Activated naive CD4-positive, alpha-beta T cell treated with anti-CD3 and anti-CD28 coated beads for 36 hours (primary cell): ENCODE measurements at regions of chr7 and their contacts with region 1.

Region 1: DNA sequence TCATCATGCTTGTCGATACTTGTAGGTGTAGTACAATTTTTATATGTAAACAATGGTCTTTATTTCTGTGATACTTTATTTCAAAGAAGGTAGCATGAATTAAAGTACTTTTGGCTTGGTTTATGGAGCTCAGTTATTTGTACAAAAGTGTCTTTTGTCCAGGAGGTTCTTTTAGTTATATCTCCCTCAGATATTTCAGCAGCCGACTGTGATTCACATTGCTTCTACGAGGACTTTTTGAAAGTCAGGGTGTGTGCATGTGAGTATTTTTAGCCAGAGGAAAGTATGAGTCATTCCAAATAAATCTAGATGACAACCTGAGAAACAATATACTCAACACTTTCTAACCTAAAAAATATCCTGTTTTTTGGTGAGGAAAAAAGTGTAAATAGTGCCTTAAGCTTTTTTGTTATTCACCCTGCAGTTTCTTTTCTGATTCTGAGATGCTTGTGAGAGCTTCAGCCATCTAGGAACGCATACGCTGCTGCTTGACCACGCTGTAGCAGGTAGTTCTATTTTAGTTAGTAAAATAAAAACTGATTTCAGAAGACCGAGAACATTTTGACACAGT is 595 bp upstream of the SUN1 start:
- DNase-seq: peak; percentile 53
- H3K4me3 Mint-ChIP-seq: peak overlapping the region; percentile 73
- H3K27ac Mint-ChIP-seq: peak overlapping the region; percentile 99
- H3K4me1 Mint-ChIP-seq: peaks cover 68% of the 10 kb centered on the region
- H3K27me3 Mint-ChIP-seq: no peaks in the 10 kb centered on the region

Region 2: GRCh38 chr7:593324-594115 is 238.2 kb before region 1 on chr7:
- CTCF ChIA-PET with region 1: no interaction called
- intact Hi-C with region 1: no loop called
- DNase-seq: peak; percentile 65
- H3K4me3 Mint-ChIP-seq: peak overlapping the region; percentile 36
- H3K27ac Mint-ChIP-seq: peak overlapping the region; percentile 69
- H3K4me1 Mint-ChIP-seq: peaks cover 31% of the 10 kb centered on the region
- H3K27me3 Mint-ChIP-seq: no peaks in the 10 kb centered on the region

Region 3: DNA sequence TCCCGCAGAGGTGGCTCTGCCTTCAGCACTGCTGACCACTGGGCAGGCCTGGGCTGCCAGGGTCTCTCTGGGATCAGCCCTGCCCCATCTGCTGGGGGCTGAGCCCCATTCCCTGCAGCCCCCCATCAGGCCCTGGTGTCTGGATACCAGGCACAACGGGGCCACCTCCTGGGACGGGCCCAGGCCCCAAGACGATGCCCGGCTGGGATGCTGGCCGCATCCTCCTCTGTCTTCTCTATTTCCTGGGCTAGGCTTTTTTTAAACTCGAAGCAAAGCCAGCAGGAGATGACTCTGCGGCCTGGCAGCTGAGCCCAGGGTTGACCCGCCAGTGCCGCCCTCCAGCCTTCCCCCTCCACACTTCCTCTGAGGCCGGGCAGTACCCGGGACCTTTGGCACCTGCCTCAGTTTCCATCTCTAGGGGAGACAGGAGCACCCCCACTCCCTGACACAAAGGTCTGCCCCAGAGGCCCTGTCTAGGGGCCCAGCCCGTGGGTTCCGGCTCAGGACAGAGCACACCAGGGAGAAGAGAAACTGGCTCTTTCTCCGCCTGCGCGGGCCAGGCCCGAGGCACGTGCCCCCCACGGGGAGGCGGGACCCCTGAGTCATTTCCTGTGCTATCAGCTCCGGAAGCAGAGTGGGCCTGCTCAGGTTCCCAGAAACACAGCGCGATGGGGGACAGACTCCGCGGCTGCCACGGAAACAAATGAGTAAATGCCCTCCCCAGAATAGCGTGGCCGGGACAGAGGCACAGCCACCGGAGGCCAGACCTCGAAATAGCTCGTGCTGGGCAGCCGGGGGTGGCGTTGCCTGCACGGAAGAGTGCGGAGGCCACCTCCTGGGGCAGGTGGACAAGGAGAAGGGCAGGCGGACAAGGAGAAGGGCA is 227.4 kb before region 1 on chr7:
- CTCF ChIA-PET with region 1: no interaction called
- intact Hi-C with region 1: loop called (anchors 5 kb)
- DNase-seq: peak; percentile 97
- H3K4me3 Mint-ChIP-seq: peak overlapping the region; percentile 84
- H3K27ac Mint-ChIP-seq: peak overlapping the region; percentile 100
- H3K4me1 Mint-ChIP-seq: peaks cover 71% of the 10 kb centered on the region
- H3K27me3 Mint-ChIP-seq: no peaks in the 10 kb centered on the region

Region 4: DNA sequence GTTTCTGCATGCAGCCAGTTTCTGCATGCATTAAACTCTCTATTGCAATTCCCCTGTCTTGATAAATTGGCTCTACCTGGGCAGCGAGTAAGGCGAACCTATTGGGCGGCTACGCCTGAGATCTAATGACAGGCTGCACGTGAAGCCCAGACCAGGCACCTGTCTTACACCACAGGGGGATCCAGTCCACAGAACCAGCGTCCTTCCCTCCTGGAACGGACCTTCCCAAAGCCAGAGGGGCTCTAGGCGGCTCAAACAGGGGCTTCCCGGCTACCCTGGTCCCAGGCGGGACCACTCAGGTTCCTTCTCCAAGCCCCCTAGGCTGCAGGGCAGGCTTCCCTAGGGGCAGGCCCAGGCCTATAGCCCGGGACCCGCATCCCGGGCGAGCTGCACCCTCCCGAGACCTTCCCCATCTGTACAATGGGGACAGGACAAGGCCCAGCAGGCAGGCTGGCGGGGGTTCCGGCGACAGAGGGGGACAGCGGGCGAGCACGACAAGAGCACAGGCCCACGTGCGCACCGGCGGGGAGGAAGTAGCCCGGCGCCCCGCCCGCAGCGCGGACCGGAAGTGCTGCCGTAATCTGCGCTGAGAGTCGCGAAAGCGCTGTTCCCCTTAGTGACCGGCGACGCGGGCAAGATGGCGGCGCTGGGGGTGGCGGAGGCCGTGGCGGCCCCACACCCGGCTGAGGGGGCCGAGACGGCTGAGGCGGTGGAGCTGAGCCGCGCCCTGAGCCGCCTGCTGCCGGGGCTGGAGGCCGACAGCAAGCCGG is 105.4 kb before region 1 on chr7 and contains the start of gene DNAAF5:
- CTCF ChIA-PET with region 1: no interaction called
- intact Hi-C with region 1: loop called (anchors 2 kb)
- DNase-seq: peak; percentile 88
- H3K4me3 Mint-ChIP-seq: peak within 1 kb of the TSS; percentile 84
- H3K27ac Mint-ChIP-seq: peak within 1 kb of the TSS; percentile 65
- H3K4me1 Mint-ChIP-seq: peaks cover 31% of the 10 kb centered on the region
- H3K27me3 Mint-ChIP-seq: no peaks in the 10 kb centered on the region
- total RNA-seq, gene DNAAF5: 26.2 to 27.5 TPM

Region 5: DNA sequence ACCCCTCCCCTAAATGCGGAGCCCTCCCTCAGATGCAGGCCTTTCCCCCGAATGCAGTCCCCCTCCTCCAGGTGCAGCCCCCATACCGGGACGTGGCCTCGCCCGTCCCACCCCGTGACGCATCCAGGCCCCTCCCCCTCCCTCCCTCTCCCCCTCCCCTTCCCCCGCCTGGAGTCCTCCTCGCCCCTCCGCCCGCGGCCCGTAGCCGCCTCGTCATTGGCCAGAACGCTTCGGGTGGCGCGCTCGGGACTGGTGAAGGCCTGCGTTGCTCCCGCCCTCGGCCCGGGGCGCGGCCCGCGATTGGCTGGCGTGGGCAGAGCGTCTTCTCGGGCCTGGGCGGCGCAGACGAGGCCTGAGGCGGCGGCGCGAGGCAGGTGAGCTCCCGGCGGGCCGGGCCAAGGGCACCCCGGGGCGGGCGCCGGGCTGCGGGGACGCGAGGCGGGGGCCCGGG is 15.4 kb before region 1 on chr7:
- CTCF ChIA-PET with region 1: interaction called, 9 read pairs
- intact Hi-C with region 1: loop called (anchors 1 kb)
- DNase-seq: peak; percentile 98
- H3K4me3 Mint-ChIP-seq: peak overlapping the region; percentile 81
- H3K27ac Mint-ChIP-seq: no peak overlapping the region
- H3K4me1 Mint-ChIP-seq: peaks cover 61% of the 10 kb centered on the region
- H3K27me3 Mint-ChIP-seq: peaks cover 5% of the 10 kb centered on the region

Region 6: DNA sequence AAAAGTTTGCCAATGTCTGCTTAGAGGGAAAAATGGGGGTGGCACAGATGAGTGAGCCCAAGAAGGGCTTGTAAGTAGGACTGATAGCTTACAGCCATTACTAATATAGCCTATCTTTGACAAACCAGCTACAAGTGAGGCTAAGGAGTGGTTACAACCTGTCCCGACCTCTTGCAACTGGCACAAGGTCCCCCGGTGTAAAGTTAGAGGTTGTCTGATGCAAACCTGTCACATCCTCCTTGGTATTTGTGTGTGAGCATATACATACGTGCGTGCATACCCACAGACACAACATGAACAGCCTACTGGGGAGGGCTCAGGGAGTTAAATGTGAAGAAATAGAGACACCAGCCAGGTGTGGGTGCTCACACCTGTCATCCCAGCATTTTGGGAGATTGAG is 108.2 kb after region 1 on chr7:
- CTCF ChIA-PET with region 1: no interaction called
- intact Hi-C with region 1: loop called (anchors 2 kb)
- DNase-seq: no peak
- H3K4me3 Mint-ChIP-seq: no peak overlapping the region
- H3K27ac Mint-ChIP-seq: no peak overlapping the region
- H3K4me1 Mint-ChIP-seq: peaks cover 39% of the 10 kb centered on the region
- H3K27me3 Mint-ChIP-seq: no peaks in the 10 kb centered on the region

Region 7: DNA sequence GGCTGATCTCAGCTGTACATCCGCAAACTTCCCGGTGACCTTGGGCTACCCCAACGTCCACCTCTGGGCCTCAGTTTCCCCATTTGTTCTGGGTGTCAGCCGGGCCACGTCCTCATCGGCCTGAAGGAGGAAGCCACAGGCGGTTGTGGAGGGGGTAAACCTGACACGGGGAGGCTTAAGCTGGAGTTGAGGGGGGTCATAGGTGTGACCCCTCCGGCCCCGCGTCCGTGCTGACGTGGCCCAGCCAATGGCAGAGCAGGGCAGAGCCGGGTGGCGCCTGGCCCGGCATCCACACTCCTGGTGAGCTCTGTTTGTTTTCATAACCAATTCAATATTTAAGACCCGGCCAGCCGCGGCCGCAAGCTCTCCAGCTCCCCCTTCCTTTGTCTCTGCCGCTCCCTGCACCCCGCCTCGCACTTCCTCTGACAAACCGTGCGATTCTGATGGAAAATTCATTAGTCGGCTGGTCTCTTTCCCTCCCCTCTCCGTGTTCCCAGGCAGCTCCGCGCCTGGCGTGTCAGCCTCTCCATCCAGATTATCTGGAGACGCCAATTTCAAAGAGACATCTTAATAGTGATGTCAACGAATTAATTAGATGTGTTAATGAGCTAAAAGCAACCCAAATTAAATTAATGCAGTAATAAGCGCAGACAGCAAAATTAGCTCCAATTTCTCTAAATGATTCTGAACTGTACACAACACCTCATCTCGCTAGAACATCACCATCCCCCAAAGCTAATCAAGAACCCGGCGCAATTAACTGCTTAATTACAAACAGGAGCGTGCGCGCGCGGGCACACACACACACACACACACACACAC is 572.2 kb after region 1 on chr7:
- CTCF ChIA-PET with region 1: no interaction called
- intact Hi-C with region 1: no loop called
- DNase-seq: no peak
- H3K4me3 Mint-ChIP-seq: no peak overlapping the region
- H3K27ac Mint-ChIP-seq: no peak overlapping the region
- H3K4me1 Mint-ChIP-seq: peaks cover 5% of the 10 kb centered on the region
- H3K27me3 Mint-ChIP-seq: peaks cover 42% of the 10 kb centered on the region